ENCODE measurements at regions of chr16 and their contacts with region 1.

Region 1: GRCh38 chr16:11423315-11424117 is 78.3 kb downstream of the RMI2 start:
- DNase-seq: no peak
- ATAC-seq: no peak
- H3K4me3 ChIP-seq: no peak overlapping the region
- H3K27ac ChIP-seq: no peak overlapping the region
- H3K4me1 ChIP-seq: no peaks in the 10 kb centered on the region
- H3K27me3 ChIP-seq: peaks cover 7% of the 10 kb centered on the region; the same call in 1 of the 2 replicates
- CTCF ChIP-seq: no peak
- POLR2A ChIP-seq: no peak
- RAD21 ChIP-seq: no peak

Region 2: GRCh38 chr16:11470676-11471415 is 47.3 kb after region 1 on chr16:
- CTCF ChIA-PET with region 1: no interaction called
- POLR2A ChIA-PET with region 1: no interaction called
- dilution Hi-C with region 1: no loop called
- in situ Hi-C with region 1: no loop called
- intact Hi-C with region 1: loop called (anchors 10 kb)
- DNase-seq: peak; percentile 49
- ATAC-seq: peak; percentile 57
- H3K4me3 ChIP-seq: no peak overlapping the region
- H3K27ac ChIP-seq: no peak overlapping the region
- H3K4me1 ChIP-seq: no peaks in the 10 kb centered on the region
- H3K27me3 ChIP-seq: peaks cover 19% of the 10 kb centered on the region
- CTCF ChIP-seq: no peak
- POLR2A ChIP-seq: no peak
- RAD21 ChIP-seq: no peak

Measured in IMR-90 (cell line).